ENCODE measurements at regions of chr16 and their contacts with region 1.

Region 1: GRCh38 chr16:73058221-73058615 is 10.3 kb upstream of the ZFHX3 start:
- DNase-seq: peak; percentile 66
- H3K4me3 ChIP-seq: peak overlapping the region; percentile 90
- H3K27ac ChIP-seq: peak overlapping the region; percentile 88
- H3K4me1 ChIP-seq: peaks cover 33% of the 10 kb centered on the region
- H3K27me3 ChIP-seq: no peaks in the 10 kb centered on the region
- CTCF ChIP-seq: no peak

Region 2: GRCh38 chr16:72501739-72502593 is 556.3 kb before region 1 on chr16:
- CTCF ChIA-PET with region 1: no interaction called
- POLR2A ChIA-PET with region 1: no interaction called
- intact Hi-C with region 1: loop called (anchors 10 kb)
- DNase-seq: peak; percentile 79
- H3K4me3 ChIP-seq: no peak overlapping the region
- H3K27ac ChIP-seq: no peak overlapping the region
- H3K4me1 ChIP-seq: no peaks in the 10 kb centered on the region
- H3K27me3 ChIP-seq: no peaks in the 10 kb centered on the region
- CTCF ChIP-seq: peak; percentile 89

Region 3: DNA sequence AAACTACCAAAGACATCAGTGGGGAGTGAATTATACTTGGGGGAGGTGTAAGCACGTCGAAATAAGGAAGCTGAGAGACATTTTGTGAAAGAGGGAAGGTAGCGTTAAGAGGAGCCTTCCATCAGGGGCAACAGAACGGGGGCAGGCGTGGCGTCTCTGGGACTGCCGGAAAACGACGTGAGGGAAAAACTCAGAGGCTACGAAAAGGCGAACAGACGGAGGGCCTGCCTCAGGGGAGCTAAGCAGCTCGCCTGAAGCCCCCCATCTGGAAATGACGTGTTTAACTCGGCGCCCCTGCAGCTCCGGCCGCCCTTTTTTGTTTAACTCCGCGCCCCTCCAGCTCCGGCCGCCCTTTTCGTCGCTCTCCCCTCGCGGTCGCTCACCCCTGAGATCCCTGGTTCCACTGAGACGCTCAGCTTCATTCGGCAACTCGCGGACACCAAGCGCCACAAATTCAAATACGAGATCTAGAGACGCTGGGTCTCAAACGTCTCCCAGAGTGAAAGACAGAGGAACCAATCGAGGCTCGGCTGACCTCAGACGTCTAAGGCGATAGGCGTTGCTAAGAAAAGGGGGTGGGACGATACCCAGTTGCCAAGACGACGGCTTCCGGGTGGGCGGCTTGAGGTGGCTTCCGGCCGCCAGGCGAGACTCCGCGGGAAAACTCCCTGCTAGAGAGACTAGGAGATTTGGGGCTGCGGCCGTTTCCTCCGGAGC is 393.6 kb before region 1 on chr16:
- CTCF ChIA-PET with region 1: no interaction called
- POLR2A ChIA-PET with region 1: no interaction called
- intact Hi-C with region 1: loop called (anchors 10 kb)
- DNase-seq: peak; percentile 99
- H3K4me3 ChIP-seq: peak overlapping the region; percentile 67
- H3K27ac ChIP-seq: peak overlapping the region; percentile 95
- H3K4me1 ChIP-seq: peaks cover 5% of the 10 kb centered on the region
- H3K27me3 ChIP-seq: no peaks in the 10 kb centered on the region
- CTCF ChIP-seq: no peak

Region 4: GRCh38 chr16:72847187-72848027 is 210.8 kb before region 1 on chr16:
- CTCF ChIA-PET with region 1: no interaction called
- POLR2A ChIA-PET with region 1: no interaction called
- intact Hi-C with region 1: loop called (anchors 5 kb)
- DNase-seq: peak; percentile 66
- H3K4me3 ChIP-seq: no peak overlapping the region
- H3K27ac ChIP-seq: peak overlapping the region; percentile 75
- H3K4me1 ChIP-seq: peaks cover 28% of the 10 kb centered on the region
- H3K27me3 ChIP-seq: no peaks in the 10 kb centered on the region
- CTCF ChIP-seq: peak; percentile 71

Region 5: DNA sequence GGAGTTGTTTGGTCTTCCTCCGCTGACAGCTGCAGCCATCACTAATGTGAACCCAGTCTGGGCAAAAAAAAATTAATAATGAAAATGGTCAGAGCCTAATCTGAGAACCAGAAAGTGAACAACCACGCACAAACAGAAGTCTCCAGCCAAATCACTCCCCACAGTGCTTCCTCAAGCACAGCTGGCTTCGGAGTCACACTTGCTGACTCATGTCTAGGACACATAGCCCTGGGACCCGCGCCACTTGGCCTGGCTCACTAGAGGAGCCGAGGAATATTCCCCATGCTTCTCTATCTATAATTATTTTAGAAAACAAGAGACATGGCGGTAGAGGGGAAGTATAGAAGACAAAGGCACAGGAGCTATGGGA is 119.4 kb before region 1 on chr16:
- CTCF ChIA-PET with region 1: interaction called, 3 read pairs
- POLR2A ChIA-PET with region 1: no interaction called
- intact Hi-C with region 1: loop called (anchors 10 kb)
- DNase-seq: peak; percentile 71
- H3K4me3 ChIP-seq: no peak overlapping the region
- H3K27ac ChIP-seq: peak overlapping the region; percentile 39
- H3K4me1 ChIP-seq: peaks cover 37% of the 10 kb centered on the region
- H3K27me3 ChIP-seq: no peaks in the 10 kb centered on the region
- CTCF ChIP-seq: no peak

Region 6: GRCh38 chr16:73172241-73172972 is 114.2 kb after region 1 on chr16:
- CTCF ChIA-PET with region 1: interaction called, 4 read pairs
- POLR2A ChIA-PET with region 1: interaction called, 13 read pairs
- intact Hi-C with region 1: loop called (anchors 5 kb)
- DNase-seq: peak; percentile 88
- H3K4me3 ChIP-seq: peak overlapping the region; percentile 18
- H3K27ac ChIP-seq: peak overlapping the region; percentile 79
- H3K4me1 ChIP-seq: peaks cover 41% of the 10 kb centered on the region
- H3K27me3 ChIP-seq: no peaks in the 10 kb centered on the region
- CTCF ChIP-seq: no peak; the same call in 1 of the 2 replicates

Region 7: GRCh38 chr16:73196670-73197069 is 138.5 kb after region 1 on chr16:
- CTCF ChIA-PET with region 1: no interaction called
- POLR2A ChIA-PET with region 1: interaction called, 4 read pairs
- intact Hi-C with region 1: loop called (anchors 5 kb)
- DNase-seq: peak; percentile 84
- H3K4me3 ChIP-seq: no peak overlapping the region
- H3K27ac ChIP-seq: no peak overlapping the region
- H3K4me1 ChIP-seq: no peaks in the 10 kb centered on the region
- H3K27me3 ChIP-seq: no peaks in the 10 kb centered on the region
- CTCF ChIP-seq: peak; percentile 78

Measured in A673 (cell line).